Heart left ventricle (tissue), 16 donors: ENCODE measurements at regions of chr7 and their contacts with region 1.

Region 1: DNA sequence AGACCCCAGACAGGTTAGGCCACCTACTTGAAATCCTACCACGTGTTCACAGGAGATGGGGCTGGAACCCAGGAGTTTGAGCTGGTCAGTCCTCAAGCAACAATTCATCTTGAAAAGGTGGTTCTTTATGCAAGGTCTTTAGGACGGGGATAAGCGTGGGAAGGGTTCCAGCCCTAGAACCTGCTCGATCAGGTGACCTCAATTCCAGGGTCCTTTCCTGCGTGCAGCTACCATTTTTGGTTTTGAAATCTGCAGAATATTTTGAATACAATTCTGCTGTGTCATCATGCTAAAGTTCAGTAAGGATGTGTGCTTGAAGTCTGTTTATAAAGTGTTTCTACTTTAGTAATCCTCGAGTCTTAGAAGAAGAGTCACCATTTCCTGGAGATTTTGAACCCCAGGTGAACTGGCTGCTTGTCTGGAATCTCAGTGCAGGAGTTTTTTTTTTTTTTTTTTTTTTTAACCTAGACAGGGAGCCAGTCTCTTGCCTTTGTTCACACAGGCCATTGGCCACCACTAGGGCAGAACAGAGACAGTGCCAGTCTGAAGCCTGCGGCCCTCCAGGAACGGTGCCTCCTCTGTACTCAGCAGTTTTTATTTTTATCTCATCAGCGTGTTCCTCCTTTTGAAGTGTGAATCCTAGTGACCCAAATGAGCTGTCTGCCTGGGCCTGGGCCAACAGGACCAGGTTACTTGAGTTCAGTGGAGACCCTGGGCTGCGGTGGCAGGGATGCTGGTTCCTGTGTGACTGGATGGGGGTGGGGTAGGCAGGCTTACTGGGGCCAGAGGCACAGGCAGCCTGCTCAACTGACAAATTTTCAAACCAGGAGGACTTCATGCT is 54.6 kb downstream of the EEPD1 start:
- DNase-seq: peak; percentile 42 to 81 (median 59)
- ATAC-seq: peak; percentile 70 to 89 (median 85)
- H3K4me3 ChIP-seq: no peak overlapping the region
- H3K27ac ChIP-seq: peak overlapping the region in 6 of 12 donors; percentile 10 to 70 (median 30)
- H3K4me1 ChIP-seq: peaks cover 6 to 83% (median 54%) of the 10 kb centered on the region in 12 donors
- H3K27me3 ChIP-seq: no peaks in the 10 kb centered on the region
- CTCF ChIP-seq: peak in 5 of 12 donors; percentile 14 to 29 (median 22)
- POLR2A ChIP-seq: no peak

Region 2: DNA sequence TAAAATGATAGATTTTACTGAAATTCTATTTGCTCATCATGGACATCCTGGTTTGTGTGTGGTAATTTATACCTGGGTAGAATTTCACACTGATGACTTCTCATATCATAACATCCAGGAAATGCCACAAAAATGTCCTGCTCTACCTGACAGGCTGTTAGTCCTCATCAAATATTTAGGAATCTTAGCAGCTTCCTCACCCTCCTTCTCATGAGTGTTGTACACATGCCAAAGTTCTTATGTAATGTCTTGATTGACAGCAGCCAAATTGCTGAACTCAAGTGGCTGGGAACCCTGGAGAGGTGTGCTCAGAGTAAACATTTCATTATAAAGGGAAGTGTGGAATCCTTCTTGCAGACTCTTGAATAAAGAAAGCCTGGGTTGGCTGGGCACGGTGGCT is 45.7 kb before region 1 on chr7:
- intact Hi-C with region 1: loop called in 3 of 10 experiments (anchors 5 to 10 kb)
- DNase-seq: no peak
- ATAC-seq: no peak
- H3K4me3 ChIP-seq: no peak overlapping the region
- H3K27ac ChIP-seq: no peak overlapping the region
- H3K4me1 ChIP-seq: peaks cover 0 to 58% (median 33%) of the 10 kb centered on the region in 12 donors
- H3K27me3 ChIP-seq: no peaks in the 10 kb centered on the region
- CTCF ChIP-seq: no peak
- POLR2A ChIP-seq: no peak